HepG2 (cell line): ENCODE measurements at regions of chr10 and their contacts with region 1.

Region 1: GRCh38 chr10:118754720-118755480 is at the start of gene CACUL1:
- DNase-seq: peak; percentile 97
- ATAC-seq: peak; percentile 94
- H3K4me3 ChIP-seq: peak within 1 kb of the TSS; percentile 83 to 93 (median 86)
- H3K27ac ChIP-seq: peak within 1 kb of the TSS; percentile 81
- H3K4me1 ChIP-seq: peaks cover 36% of the 10 kb centered on the region
- H3K27me3 ChIP-seq: no peaks in the 10 kb centered on the region; a peak in 1 of 5 replicates
- CTCF ChIP-seq: peak; percentile 36
- EP300 ChIP-seq: no peak
- POLR2A ChIP-seq: peak; percentile 63 to 79
- RAD21 ChIP-seq: no peak
- total RNA-seq, gene CACUL1: 31.0 and 43.6 TPM in 2 replicates

Region 2: DNA sequence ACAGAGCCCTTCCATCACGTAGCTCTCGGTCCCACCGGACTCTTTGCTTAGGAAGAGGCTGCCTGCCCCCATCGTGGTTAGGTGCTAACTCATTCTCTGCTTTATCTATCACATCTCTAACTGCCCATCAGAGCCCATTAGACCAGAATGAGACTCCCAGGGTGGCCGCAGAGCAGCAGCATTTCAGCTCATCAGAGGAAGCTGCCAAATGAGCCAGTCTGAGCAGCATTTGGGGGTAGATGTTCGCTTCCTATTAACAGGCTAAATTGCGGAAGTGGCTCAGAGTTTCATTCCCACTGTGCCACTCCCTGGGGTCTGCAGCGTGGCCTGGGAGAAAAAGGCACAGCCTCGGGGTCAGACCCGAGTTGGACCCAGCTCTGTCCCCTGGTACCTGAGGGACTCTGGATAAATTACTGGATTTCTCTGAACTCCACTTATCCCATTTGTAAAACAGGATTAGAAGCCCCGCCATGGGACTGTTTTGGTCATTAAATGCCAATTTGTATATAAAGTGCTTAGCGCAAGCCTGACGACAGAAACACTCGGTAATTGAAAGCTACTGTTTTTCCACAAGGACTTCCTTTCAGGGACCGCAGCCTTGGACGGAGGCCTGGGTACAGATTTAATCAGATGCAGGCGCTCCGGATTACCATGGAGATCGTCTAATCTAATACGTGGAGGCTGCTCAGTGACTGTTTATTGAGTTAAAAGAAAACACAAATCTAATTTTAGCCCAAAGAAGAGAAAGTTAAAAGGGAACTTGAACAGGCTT is 85.7 kb before region 1 on chr10:
- CTCF ChIA-PET with region 1: no interaction called
- POLR2A ChIA-PET with region 1: no interaction called
- in situ Hi-C with region 1: no loop called
- intact Hi-C with region 1: no loop called
- DNase-seq: no peak
- ATAC-seq: peak; percentile 5; the same call in 2 of the 3 replicates
- H3K4me3 ChIP-seq: no peak overlapping the region
- H3K27ac ChIP-seq: no peak overlapping the region
- H3K4me1 ChIP-seq: peaks cover 23% of the 10 kb centered on the region
- H3K27me3 ChIP-seq: no peaks in the 10 kb centered on the region; a peak in 1 of 5 replicates
- CTCF ChIP-seq: no peak
- EP300 ChIP-seq: no peak
- POLR2A ChIP-seq: no peak
- RAD21 ChIP-seq: no peak

Region 3: DNA sequence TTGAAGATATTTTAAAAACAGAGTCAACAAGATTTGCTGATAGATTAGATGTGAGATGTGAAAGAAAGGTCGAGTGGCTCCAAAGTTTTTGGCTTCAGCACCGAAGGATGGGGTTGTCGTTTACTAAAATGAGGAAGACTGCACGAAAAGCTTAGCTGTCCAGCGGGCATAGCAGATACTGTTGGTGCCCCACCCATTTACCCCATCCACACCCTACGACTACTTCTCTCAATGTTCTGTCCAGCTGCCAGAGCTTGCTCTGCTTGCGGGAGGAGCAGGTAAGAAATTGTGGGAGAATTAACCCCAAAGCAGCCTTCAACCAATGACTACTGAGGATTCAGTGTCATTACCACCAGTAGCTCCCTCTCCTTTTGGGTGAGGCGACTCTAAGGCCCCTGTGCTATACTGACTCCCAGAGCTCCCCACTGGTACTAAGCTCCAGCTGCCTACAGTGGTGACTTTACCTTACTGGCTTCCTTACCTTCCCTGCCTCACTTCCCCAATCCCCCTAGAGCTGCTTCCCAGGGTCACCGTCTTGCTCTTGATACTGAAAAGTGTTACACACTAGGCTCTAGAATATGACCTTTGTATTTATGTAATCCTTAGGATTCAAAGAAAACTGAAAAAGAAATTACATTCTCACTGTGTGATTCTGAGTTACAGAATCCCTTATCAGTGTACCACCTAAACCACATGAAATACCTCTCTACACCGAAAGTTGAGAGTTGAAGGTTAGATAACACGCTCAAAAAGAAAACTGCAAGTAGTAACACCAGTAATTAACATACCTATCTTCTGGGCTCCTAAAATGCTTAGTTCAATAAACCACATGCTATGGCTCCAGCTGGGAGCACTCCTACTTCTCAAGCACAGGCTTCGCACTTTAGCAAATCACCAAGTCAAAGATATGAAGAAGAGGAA is 22.4 kb before region 1 on chr10:
- CTCF ChIA-PET with region 1: no interaction called
- POLR2A ChIA-PET with region 1: interaction called, 11 read pairs
- in situ Hi-C with region 1: no loop called
- intact Hi-C with region 1: no loop called
- DNase-seq: no peak
- ATAC-seq: no peak
- H3K4me3 ChIP-seq: no peak overlapping the region
- H3K27ac ChIP-seq: no peak overlapping the region
- H3K4me1 ChIP-seq: peaks cover 30% of the 10 kb centered on the region
- H3K27me3 ChIP-seq: no peaks in the 10 kb centered on the region
- CTCF ChIP-seq: no peak
- EP300 ChIP-seq: no peak
- POLR2A ChIP-seq: no peak
- RAD21 ChIP-seq: no peak

Region 4: GRCh38 chr10:119028900-119029612 is 274.2 kb after region 1 on chr10:
- CTCF ChIA-PET with region 1: no interaction called
- POLR2A ChIA-PET with region 1: no interaction called
- in situ Hi-C with region 1: no loop called
- intact Hi-C with region 1: loop called (anchors 10 kb)
- DNase-seq: peak; percentile 84
- ATAC-seq: peak; percentile 82
- H3K4me3 ChIP-seq: peak overlapping the region; percentile 49 to 77 (median 64)
- H3K27ac ChIP-seq: no peak overlapping the region
- H3K4me1 ChIP-seq: peaks cover 60% of the 10 kb centered on the region
- H3K27me3 ChIP-seq: peaks cover 3 to 27% of the 10 kb centered on the region in 2 experiments; a peak in 2 of 5 replicates
- CTCF ChIP-seq: no peak
- EP300 ChIP-seq: no peak
- POLR2A ChIP-seq: no peak; a peak in 1 of 4 replicates
- RAD21 ChIP-seq: no peak; the same call in 1 of the 2 replicates

Region 5: DNA sequence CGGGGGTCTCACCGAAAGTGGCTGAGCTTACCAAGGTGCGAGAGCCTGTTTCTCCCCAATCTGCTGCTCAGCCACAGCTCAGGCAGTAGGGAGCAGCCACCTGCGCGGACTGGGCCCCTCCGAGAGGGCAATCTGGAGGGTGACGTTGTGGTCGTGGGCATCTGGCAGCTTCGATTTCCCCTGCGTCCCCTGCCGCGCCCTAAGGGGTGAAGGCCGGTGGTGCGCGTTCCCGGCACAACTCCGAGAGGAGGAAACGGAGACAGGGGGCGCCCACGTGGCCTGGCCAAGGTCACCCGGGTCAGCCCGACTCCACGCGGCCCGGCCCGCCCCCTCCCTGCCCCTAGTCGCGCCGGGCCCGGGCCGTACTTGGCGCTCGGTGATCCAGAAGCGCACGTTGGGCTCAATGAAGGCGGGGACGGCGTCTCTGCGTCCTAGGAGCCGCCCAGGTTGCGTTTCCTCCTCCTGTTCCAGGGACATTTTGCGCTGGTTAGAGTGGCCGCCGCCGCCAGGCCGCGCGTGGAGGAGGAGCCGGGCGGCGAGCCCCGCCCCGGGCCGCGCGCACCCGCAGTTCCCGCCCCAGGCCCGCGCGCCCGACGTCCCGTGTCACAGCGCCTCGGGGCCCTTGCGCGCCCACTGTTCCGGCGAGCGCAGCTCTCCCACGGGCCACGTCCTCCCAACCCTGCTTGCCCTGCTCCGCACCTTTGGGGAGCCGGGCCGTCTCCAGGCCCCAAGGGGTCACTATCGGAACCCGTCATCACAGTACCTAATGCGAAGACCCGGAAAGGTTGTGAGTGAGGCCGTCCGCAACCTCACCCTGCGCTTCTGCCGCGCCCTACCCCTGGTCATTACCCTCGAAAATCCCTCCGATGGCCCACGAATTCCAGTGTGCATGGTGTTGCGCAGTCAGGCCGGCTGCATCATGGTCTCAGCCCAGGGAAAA is 410.5 kb after region 1 on chr10 and contains the start of gene SFXN4:
- CTCF ChIA-PET with region 1: no interaction called
- POLR2A ChIA-PET with region 1: no interaction called
- in situ Hi-C with region 1: no loop called
- intact Hi-C with region 1: loop called (anchors 10 kb)
- DNase-seq: peak; percentile 63
- ATAC-seq: peak; percentile 90
- H3K4me3 ChIP-seq: peak within 1 kb of the TSS; percentile 75 to 81 (median 76)
- H3K27ac ChIP-seq: peak within 1 kb of the TSS; percentile 91
- H3K4me1 ChIP-seq: peaks cover 26% of the 10 kb centered on the region
- H3K27me3 ChIP-seq: no peaks in the 10 kb centered on the region
- CTCF ChIP-seq: peak; percentile 64
- EP300 ChIP-seq: no peak
- POLR2A ChIP-seq: peak; percentile 60 to 77
- RAD21 ChIP-seq: peak; percentile 50; the same call in 1 of the 2 replicates
- total RNA-seq, gene SFXN4: 47.4 and 64.9 TPM in 2 replicates